ENCODE measurements at regions of chr5 and their contacts with region 1.

Region 1: DNA sequence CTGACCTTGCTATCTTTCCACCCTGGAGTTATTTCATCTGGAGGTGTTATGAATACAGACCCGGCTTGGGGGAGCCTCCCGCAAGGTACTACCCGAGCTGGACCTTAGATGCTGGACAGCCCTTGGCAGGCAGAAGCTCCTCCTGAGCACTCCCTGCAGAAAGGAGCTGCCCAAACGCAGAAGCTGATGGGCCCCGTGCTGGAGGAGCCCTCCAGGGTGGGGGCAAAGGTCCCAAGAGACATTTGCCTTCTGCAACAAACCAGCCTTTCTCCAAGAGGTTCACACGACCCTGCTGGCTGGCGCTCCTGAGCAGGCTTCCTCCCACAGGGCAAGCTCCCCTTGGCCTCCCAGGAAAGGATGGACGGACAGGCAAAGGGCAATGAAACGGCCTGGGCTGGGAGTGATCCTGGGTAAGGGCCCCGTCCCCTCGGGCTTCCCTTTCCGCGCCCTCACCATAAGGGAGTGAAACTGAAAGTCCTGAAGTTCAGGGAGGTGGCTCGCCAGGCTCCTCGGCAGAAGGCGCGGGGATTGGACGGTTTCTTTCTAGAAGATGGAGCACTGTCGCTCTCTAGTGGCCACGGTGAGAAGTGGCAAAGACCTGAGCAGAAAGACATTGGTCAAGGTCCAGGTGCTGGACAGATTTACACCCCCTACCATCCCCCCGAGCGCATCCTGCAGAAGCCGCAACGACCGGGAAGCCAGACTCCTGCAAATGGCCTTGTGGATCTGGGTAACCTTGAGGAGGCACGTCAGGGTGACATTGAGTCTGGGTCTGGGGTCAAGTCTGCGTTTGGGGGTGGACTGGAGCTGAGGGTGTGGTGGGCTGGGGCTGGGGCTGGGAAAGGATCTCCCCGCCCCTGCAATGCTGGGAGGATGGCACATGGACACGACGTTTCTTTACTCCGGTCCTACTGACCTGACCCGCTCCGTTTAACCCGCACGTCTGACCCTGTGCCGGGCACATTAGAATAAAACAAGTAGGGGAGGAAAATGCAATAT is 56.4 kb downstream of the NEURL1B start:
- DNase-seq: no peak
- H3K4me3 ChIP-seq: peak overlapping the region; percentile 66
- H3K27me3 ChIP-seq: peaks cover 16% of the 10 kb centered on the region
- CTCF ChIP-seq: peak; percentile 92

Region 2: DNA sequence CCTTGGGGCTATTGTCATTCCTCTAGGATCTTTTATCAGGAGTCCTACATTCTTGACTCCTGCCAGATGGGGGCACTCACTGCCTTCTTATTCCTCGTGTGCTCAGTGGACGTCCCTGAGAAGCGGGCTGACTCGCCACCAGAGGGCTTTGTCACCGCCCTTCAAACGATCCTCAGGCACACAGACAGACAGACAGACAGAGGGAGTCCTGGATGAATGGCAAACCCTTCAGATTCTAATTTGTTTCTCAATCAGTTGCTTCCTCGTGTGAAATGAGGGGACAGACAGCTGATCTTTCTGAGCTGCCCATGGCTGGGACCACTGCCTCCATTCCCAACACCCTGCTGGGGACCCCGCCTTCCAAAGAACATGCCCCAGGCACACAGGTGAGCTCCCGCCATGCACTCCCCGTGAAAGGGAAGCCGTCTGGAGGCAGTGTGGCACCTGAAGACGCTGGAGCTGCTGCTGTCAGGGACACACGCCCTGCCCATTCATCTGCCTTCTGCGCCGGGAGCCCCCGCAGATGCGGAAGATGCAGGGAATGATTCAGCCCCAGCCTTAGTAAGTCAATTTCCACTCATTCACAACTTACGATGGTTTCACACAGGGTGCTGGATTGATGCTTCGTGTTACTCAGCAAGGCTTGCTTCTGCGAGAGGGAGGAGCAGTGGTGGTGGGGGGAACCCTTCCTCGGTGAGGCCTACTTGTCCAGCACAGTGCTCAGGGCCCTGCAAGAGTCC is 218.2 kb before region 1 on chr5:
- CTCF ChIA-PET with region 1: interaction called, 284 read pairs
- POLR2A ChIA-PET with region 1: no interaction called
- DNase-seq: peak; percentile 24
- H3K4me3 ChIP-seq: no peak overlapping the region
- H3K27me3 ChIP-seq: no peaks in the 10 kb centered on the region; the same call in none of the 2 replicates
- CTCF ChIP-seq: peak; percentile 87

Region 3: DNA sequence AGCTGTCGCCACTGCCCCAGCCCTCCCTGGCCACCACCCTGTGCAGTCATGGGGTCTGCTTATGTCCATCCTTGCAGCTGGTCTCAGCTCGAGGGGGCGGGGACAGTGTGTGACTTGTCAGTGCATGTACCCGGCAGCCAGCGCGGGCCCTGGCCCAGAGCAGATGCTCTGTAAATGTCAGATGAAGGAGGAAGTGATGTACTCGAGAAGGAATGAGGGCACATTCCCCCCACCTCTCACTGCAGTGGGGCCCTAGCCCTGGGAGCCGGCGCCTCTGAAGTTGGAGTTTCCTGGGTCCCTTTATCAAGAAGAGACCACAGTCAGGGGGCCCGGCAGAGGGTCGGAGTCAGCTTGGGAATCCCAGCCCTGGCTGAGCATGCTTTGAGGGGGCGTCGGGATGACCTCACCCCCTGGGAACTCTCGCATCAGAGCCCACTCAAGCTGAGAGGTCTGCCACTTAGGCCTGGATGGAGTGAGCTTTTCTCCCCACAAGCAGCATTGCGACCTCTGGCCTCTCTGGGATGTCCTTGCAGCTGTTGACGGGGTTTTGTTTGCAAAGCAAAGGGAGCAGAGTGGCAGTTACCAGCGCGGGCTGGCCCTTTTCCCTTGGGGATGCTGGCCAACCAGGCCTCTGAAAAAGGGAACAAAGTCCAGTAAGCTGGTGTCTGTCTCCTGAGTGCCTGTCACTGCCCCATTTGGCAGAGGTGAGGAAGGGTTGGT is 37.4 kb before region 1 on chr5:
- CTCF ChIA-PET with region 1: interaction called, 16 read pairs
- POLR2A ChIA-PET with region 1: no interaction called
- DNase-seq: peak; percentile 58
- H3K4me3 ChIP-seq: no peak overlapping the region
- H3K27me3 ChIP-seq: no peaks in the 10 kb centered on the region
- CTCF ChIP-seq: no peak

Region 4: DNA sequence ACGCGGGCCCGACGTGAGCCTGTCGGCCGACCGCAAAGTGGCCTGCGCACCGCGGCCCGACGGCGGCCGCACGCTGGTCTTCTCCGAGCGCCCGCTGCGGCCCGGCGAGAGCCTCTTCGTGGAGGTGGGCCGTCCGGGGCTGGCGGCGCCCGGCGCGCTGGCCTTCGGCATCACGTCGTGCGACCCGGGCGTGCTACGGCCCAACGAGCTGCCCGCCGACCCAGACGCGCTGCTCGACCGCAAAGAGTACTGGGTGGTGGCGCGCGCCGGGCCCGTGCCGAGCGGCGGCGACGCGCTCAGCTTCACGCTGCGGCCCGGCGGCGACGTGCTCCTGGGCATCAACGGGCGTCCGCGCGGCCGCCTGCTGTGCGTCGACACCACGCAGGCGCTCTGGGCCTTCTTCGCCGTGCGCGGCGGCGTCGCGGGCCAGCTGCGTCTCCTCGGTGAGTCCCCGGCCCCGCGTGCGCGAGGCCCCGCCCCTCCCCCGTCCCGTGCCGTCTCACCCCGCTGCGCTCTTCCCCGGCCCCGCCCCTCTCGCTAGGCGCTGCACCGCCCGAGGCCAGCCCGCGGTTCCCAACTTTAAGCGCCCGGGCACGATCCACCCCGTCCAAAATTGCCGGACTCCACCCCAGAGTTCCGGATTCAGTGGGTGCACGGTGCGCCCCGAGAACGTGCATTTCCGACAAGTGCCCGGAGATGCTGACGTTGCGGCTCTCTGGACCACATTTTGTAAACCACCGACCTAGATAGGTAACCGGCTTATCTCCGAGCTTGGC is 13.5 kb before region 1 on chr5:
- CTCF ChIA-PET with region 1: interaction called, 19 read pairs
- POLR2A ChIA-PET with region 1: no interaction called
- DNase-seq: no peak
- H3K4me3 ChIP-seq: no peak overlapping the region
- H3K27me3 ChIP-seq: no peaks in the 10 kb centered on the region
- CTCF ChIP-seq: no peak

Measured in BJ (cell line).